Mammary epithelial cell (primary cell): ENCODE measurements at regions of chr11 and their contacts with region 1.

Region 1: GRCh38 chr11:2559527-2560311 is 114.9 kb downstream of the KCNQ1 start:
- DNase-seq: no peak
- H3K4me3 ChIP-seq: no peak overlapping the region
- H3K27ac ChIP-seq: no peak overlapping the region
- H3K4me1 ChIP-seq: no peaks in the 10 kb centered on the region
- H3K27me3 ChIP-seq: no peaks in the 10 kb centered on the region
- CTCF ChIP-seq: no peak

Region 2: GRCh38 chr11:2609345-2609744 is 49.6 kb after region 1 on chr11:
- CTCF ChIA-PET with region 1: no interaction called
- dilution Hi-C with region 1: loop called (anchors 5 kb)
- in situ Hi-C with region 1: no loop called
- intact Hi-C with region 1: no loop called
- DNase-seq: no peak
- H3K4me3 ChIP-seq: no peak overlapping the region
- H3K27ac ChIP-seq: no peak overlapping the region
- H3K4me1 ChIP-seq: no peaks in the 10 kb centered on the region
- H3K27me3 ChIP-seq: peaks cover 11% of the 10 kb centered on the region
- CTCF ChIP-seq: no peak

Region 3: DNA sequence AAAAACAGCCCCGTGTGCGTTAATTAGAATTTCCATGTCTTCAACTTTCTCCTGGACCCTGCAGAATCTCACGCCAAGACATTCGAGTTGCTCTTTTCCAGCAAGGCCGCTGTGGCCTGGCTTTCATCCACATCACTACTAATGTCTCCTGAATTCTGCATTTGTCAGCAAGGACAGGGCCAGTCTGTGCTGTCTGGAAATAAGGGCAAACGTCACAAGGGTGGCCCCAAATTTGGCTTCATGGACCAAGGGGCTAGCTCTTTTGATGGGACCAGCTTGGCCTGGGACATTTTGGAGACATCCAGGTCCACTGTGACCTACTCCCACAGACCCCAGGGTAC is 106.7 kb after region 1 on chr11:
- CTCF ChIA-PET with region 1: no interaction called
- dilution Hi-C with region 1: loop called (anchors 5 kb)
- in situ Hi-C with region 1: no loop called
- intact Hi-C with region 1: no loop called
- DNase-seq: no peak
- H3K4me3 ChIP-seq: no peak overlapping the region
- H3K27ac ChIP-seq: no peak overlapping the region
- H3K4me1 ChIP-seq: no peaks in the 10 kb centered on the region
- H3K27me3 ChIP-seq: no peaks in the 10 kb centered on the region
- CTCF ChIP-seq: no peak